Activated B cell treated with CpG ODN at 0.5 μM for 24 hours (primary cell): ENCODE measurements at regions of chr19 and their contacts with region 1.

Region 1: DNA sequence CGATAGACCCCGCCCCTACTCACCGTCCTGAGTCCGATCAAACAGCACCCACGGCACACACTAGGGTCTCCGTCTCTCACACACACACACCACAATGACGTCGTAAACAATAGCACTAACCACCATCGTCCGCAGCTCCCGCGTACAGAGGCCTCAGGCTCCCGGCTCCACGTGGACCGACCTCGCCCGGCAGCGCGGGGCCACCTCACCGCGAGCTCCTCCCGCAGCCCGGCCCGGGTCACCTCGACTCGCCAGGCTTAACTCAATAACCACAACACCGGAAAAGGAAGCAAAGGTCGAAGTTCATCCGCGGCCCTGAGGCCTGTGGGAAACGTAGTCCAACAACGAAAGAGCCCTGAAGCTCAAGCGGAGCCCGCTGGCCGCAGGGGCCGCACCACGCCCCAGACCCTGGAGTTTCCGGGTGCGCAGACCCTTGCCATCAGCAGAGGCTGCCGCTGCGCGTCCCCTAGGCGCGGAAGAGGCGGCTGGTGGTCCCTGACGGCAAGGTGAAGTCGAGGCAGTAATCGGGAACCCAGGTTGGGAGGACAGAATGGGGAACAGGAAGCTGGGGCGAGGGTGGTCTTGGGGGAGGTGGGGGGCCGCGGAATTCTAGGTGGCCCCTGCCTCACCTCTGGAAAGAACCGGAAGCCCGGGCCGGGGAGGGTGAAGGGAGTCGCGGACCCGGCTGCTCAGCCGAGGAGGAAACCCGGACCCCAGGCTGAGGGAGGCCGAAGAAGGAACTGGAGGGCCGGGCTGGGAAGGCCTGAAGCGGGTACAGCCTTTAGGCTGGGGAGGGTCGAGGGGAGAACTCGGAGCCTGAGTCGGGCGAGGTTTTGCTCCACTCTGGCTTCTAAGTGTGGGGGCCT is at the start of gene ZNF529:
- DNase-seq: peak; percentile 79
- ATAC-seq: peak; percentile 91
- H3K4me3 Mint-ChIP-seq: peak within 1 kb of the TSS; percentile 89
- H3K27ac Mint-ChIP-seq: peak within 1 kb of the TSS; percentile 86
- H3K4me1 Mint-ChIP-seq: peaks cover 33% of the 10 kb centered on the region
- H3K27me3 Mint-ChIP-seq: no peaks in the 10 kb centered on the region
- CTCF ChIP-seq: no peak
- total RNA-seq, gene ZNF529: 21.9 and 23.6 TPM in 2 replicates

Region 2: DNA sequence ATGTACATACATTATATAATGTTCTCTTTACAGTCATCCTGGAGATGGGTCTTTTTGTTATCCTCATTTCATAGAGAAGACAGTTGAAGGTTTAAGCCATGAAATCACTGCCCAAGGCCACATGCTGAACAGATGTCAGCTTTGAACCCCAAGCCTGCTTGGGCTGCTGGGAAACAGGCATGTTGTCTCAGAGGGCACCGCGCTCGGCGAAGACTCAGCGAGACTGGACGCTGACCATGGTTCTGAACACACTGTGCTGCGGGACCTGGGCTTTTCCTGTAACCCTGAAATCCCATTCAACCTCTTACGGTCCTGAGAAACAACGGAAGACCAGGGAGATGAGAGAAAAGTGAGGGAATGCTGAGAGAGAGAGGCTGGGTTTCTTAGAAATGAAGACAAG is 609.7 kb before region 1 on chr19:
- CTCF ChIA-PET with region 1: no interaction called
- POLR2A ChIA-PET with region 1: no interaction called
- intact Hi-C with region 1: no loop called
- DNase-seq: no peak
- ATAC-seq: no peak
- H3K4me3 Mint-ChIP-seq: no peak overlapping the region
- H3K27ac Mint-ChIP-seq: no peak overlapping the region
- H3K4me1 Mint-ChIP-seq: peaks cover 5% of the 10 kb centered on the region
- H3K27me3 Mint-ChIP-seq: peaks cover 23% of the 10 kb centered on the region
- CTCF ChIP-seq: no peak

Region 3: GRCh38 chr19:36418287-36419001 is 154.8 kb before region 1 on chr19 and contains the start of gene ZFP82:
- CTCF ChIA-PET with region 1: no interaction called
- POLR2A ChIA-PET with region 1: no interaction called
- intact Hi-C with region 1: loop called (anchors 10 kb)
- DNase-seq: peak; percentile 87
- ATAC-seq: peak; percentile 95
- H3K4me3 Mint-ChIP-seq: peak within 1 kb of the TSS; percentile 97
- H3K27ac Mint-ChIP-seq: peak within 1 kb of the TSS; percentile 97
- H3K4me1 Mint-ChIP-seq: peaks cover 30% of the 10 kb centered on the region
- H3K27me3 Mint-ChIP-seq: peaks cover 15% of the 10 kb centered on the region
- CTCF ChIP-seq: no peak
- total RNA-seq, gene ZFP82: 10.4 and 11.4 TPM in 2 replicates

Region 4: GRCh38 chr19:36605101-36605876 is 32.0 kb after region 1 on chr19 and contains the start of gene ZNF382:
- CTCF ChIA-PET with region 1: interaction called, 3 read pairs
- POLR2A ChIA-PET with region 1: interaction called, 18 read pairs
- intact Hi-C with region 1: loop called (anchors 1 kb)
- DNase-seq: peak; percentile 85
- ATAC-seq: peak; percentile 80
- H3K4me3 Mint-ChIP-seq: peak within 1 kb of the TSS; percentile 97
- H3K27ac Mint-ChIP-seq: peak within 1 kb of the TSS; percentile 97
- H3K4me1 Mint-ChIP-seq: peaks cover 28% of the 10 kb centered on the region
- H3K27me3 Mint-ChIP-seq: no peaks in the 10 kb centered on the region
- CTCF ChIP-seq: no peak
- total RNA-seq, gene ZNF382: 11.5 and 14.4 TPM in 2 replicates

Region 5: GRCh38 chr19:36772311-36773222 is 199.3 kb after region 1 on chr19 and contains the start of gene ZNF850:
- CTCF ChIA-PET with region 1: no interaction called
- POLR2A ChIA-PET with region 1: no interaction called
- intact Hi-C with region 1: loop called (anchors 1 kb)
- DNase-seq: peak; percentile 89
- ATAC-seq: peak; percentile 92
- H3K4me3 Mint-ChIP-seq: peak within 1 kb of the TSS; percentile 92
- H3K27ac Mint-ChIP-seq: peak within 1 kb of the TSS; percentile 85
- H3K4me1 Mint-ChIP-seq: peaks cover 24% of the 10 kb centered on the region
- H3K27me3 Mint-ChIP-seq: no peaks in the 10 kb centered on the region
- CTCF ChIP-seq: no peak
- total RNA-seq, gene ZNF850: 5.8 and 7.9 TPM in 2 replicates